ENCODE measurements at regions of chr9 and their contacts with region 1.

Region 1: DNA sequence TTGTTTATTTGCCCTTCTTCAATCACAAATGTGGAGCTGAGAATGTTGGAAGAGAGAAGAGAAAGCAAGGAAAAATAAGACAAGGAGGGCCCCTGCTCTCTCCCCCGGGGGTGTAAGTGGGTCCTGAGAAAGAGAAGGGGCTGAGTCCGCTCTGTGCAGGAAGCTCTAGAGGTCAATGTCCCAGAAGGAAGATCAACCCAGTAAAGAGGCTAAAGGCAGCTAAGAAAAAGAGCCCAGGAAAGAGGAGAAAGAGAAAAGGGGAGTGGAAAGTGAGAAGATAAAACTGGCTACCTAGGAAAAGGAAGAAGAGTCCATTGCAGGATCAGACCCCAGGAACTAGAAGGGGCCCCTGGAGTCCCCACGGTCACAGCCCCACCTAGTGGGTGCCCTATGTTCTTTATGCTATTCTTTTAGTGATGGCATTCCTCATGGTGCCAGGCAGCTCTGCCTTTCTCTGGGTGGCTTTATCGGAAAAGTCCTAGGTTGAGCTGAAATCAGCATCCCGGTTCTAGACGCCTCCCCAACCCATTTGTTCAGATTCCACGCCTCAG is 583.4 kb downstream of the ACTL7B start:
- DNase-seq: no peak
- ATAC-seq: peak; percentile 67
- H3K4me3 ChIP-seq: no peak overlapping the region
- H3K27ac ChIP-seq: no peak overlapping the region
- H3K4me1 ChIP-seq: no peaks in the 10 kb centered on the region
- H3K27me3 ChIP-seq: no peaks in the 10 kb centered on the region
- CTCF ChIP-seq: peak; percentile 13 to 29 (median 17); a peak in 3 of 6 replicates
- EP300 ChIP-seq: no peak
- POLR2A ChIP-seq: no peak
- RAD21 ChIP-seq: peak; percentile 53

Region 2: DNA sequence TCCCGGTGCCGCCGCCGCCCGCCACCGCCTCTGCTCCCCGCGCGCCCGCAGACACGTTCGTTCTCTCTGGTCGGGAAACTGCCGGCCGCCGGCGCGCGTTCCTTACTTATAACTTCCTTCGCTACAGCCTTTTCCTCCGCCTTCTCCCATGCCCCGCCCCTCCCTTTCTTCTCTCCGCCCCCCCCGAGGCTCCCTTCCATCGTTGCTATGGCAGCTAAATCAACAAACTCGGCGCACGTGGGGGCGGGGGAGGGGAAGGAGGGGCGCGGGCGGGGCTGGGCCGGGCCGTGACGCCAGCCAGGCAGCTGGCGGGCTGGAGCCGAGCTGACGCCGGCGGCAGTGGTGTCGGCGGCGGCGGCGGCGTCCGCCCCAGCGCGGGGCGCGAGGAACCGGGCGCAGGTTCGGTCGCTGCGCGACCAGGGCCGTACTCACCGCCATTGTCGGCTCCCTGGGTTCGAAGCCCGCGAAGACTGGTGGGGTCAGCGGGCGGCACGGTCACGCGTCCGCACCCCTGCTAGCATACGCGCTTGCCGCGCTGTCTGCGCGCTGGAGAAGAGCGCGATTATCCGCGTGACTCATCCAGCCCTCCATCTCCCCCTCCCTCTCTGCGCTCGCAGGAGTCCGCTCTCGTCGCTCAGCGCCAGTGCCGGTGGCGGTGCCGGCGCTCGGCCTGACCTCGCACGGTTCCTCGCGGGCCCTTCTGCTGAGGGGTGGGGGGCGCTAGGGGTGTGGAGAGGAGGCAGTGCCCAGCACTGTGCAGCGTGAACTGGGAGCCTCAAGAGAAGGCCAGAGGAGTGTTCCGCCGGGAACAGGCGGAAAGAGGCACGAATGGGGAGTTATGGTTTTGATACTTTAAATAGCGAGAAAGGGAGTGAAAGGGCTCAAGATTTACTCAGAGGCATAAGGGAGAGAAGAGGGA is 782.5 kb before region 1 on chr9 and contains the start of gene KLF4:
- CTCF ChIA-PET with region 1: no interaction called
- POLR2A ChIA-PET with region 1: no interaction called
- RAD21 ChIA-PET with region 1: no interaction called
- SMC1A ChIA-PET with region 1: no interaction called
- in situ Hi-C with region 1: loop called (anchors 25 kb)
- intact Hi-C with region 1: loop called (anchors 2 kb)
- DNase-seq: no peak
- ATAC-seq: peak; percentile 88
- H3K4me3 ChIP-seq: peak within 1 kb of the TSS; percentile 57; the same call in 1 of the 2 replicates
- H3K27ac ChIP-seq: no peak within 1 kb of the TSS
- H3K4me1 ChIP-seq: peaks cover 2% of the 10 kb centered on the region; the same call in 1 of the 2 replicates
- H3K27me3 ChIP-seq: peaks cover 8 to 25% of the 10 kb centered on the region in 2 experiments
- CTCF ChIP-seq: no peak
- EP300 ChIP-seq: no peak
- POLR2A ChIP-seq: no peak
- RAD21 ChIP-seq: no peak
- polyA plus RNA-seq, gene KLF4: 0.05 TPM in 1 of 2 experiments, not detected in the other